ENCODE measurements at regions of chr4 and their contacts with region 1.

Region 1: DNA sequence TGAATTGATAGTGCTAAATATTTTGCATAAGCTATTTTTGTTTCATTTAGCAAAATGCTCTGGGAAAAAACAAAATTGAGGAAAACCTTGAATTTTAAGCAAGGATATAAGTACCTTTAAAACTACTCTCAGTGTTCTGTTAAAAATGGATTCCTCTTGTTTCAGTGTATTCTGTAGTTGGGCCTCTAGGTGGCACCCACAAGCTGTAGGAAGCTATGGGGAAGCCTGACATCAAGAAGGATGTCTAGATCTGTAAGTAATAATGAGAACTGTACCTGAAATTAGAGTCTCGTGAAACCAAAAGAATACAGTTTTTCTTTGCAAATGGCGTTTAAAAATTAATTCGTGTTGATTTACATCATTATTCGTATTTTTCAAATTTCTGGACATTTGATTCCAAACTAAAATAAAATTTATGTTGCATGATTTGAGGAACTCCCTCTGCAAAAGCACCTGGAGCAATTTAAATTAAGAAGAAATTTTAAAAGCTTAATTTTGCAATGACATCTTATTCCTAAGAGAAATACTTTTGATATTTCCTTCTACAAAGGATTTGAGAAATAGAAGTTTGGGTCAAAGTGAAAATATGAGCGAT is 51.2 kb downstream of the TMPRSS11E start:
- DNase-seq: peak; percentile 53
- ATAC-seq: peak; percentile 85
- H3K4me3 ChIP-seq: no peak overlapping the region
- H3K27ac ChIP-seq: no peak overlapping the region
- H3K4me1 ChIP-seq: no peaks in the 10 kb centered on the region
- H3K27me3 ChIP-seq: no peaks in the 10 kb centered on the region
- CTCF ChIP-seq: peak; percentile 67 to 88 (median 76)
- POLR2A ChIP-seq: no peak
- RAD21 ChIP-seq: peak; percentile 87

Region 2: GRCh38 chr4:67545199-67546003 is 953.1 kb before region 1 on chr4 and contains the start of gene CENPC:
- CTCF ChIA-PET with region 1: no interaction called
- POLR2A ChIA-PET with region 1: no interaction called
- RAD21 ChIA-PET with region 1: no interaction called
- intact Hi-C with region 1: no loop called
- DNase-seq: peak; percentile 94
- ATAC-seq: peak; percentile 98
- H3K4me3 ChIP-seq: peak within 1 kb of the TSS; percentile 74 to 91
- H3K27ac ChIP-seq: peak within 1 kb of the TSS; percentile 82
- H3K4me1 ChIP-seq: peaks cover 5 to 11% of the 10 kb centered on the region in 2 experiments; a peak in 3 of 4 replicates
- H3K27me3 ChIP-seq: no peaks in the 10 kb centered on the region
- CTCF ChIP-seq: no peak
- POLR2A ChIP-seq: peak; percentile 69
- RAD21 ChIP-seq: no peak
- total RNA-seq, gene CENPC: 15.4 TPM

Region 3: GRCh38 chr4:69025191-69025998 is 526.9 kb after region 1 on chr4:
- CTCF ChIA-PET with region 1: no interaction called
- POLR2A ChIA-PET with region 1: no interaction called
- RAD21 ChIA-PET with region 1: no interaction called
- intact Hi-C with region 1: loop called (anchors 10 kb)
- DNase-seq: peak; percentile 2
- ATAC-seq: peak; percentile 86
- H3K4me3 ChIP-seq: no peak overlapping the region
- H3K27ac ChIP-seq: no peak overlapping the region
- H3K4me1 ChIP-seq: no peaks in the 10 kb centered on the region
- H3K27me3 ChIP-seq: no peaks in the 10 kb centered on the region
- CTCF ChIP-seq: peak in 2 of 3 experiments; percentile 54 to 55; a peak in 4 of 6 replicates
- POLR2A ChIP-seq: no peak
- RAD21 ChIP-seq: peak; percentile 51

Region 4: GRCh38 chr4:69167300-69167699 is 668.8 kb after region 1 on chr4:
- CTCF ChIA-PET with region 1: no interaction called
- POLR2A ChIA-PET with region 1: no interaction called
- RAD21 ChIA-PET with region 1: interaction called in 1 of 2 experiments, 3 read pairs
- intact Hi-C with region 1: loop called (anchors 1 kb)
- DNase-seq: no peak
- ATAC-seq: no peak
- H3K4me3 ChIP-seq: no peak overlapping the region
- H3K27ac ChIP-seq: no peak overlapping the region
- H3K4me1 ChIP-seq: no peaks in the 10 kb centered on the region
- H3K27me3 ChIP-seq: no peaks in the 10 kb centered on the region
- CTCF ChIP-seq: no peak
- POLR2A ChIP-seq: no peak
- RAD21 ChIP-seq: no peak

Region 5: GRCh38 chr4:69330345-69331047 is 832.0 kb after region 1 on chr4:
- CTCF ChIA-PET with region 1: no interaction called
- POLR2A ChIA-PET with region 1: no interaction called
- RAD21 ChIA-PET with region 1: no interaction called
- intact Hi-C with region 1: loop called (anchors 5 kb)
- DNase-seq: no peak
- ATAC-seq: no peak
- H3K4me3 ChIP-seq: no peak overlapping the region
- H3K27ac ChIP-seq: no peak overlapping the region
- H3K4me1 ChIP-seq: no peaks in the 10 kb centered on the region
- H3K27me3 ChIP-seq: no peaks in the 10 kb centered on the region
- CTCF ChIP-seq: no peak
- POLR2A ChIP-seq: no peak
- RAD21 ChIP-seq: no peak

Region 6: DNA sequence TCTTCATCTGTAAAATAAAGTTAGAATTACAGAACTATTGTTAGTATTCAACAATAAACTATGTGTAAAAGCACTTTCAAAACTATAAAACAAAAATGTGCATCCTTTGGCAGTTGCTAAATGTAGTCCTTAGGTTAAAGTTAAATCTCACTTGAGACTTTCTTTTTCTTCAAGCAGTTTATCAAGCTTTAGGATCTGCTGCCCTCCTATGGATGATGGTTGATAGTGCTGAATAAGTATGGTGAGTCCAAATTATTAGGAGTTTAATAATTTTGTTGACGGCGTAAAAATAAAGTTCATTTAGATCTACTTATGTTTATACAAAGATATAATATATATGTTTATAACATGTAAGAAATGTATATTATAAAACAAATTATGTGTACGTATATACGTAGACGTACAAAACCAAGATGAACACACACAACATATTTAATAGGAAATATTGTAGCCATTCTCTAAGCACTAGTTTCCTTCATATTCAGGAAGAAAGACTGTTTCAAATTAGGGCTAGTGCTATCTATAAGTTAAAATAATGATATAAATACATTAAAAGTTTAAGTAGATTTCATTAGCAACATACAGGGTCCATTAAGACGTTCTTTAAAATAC is 1118.7 kb after region 1 on chr4:
- CTCF ChIA-PET with region 1: no interaction called
- POLR2A ChIA-PET with region 1: no interaction called
- RAD21 ChIA-PET with region 1: interaction called in 1 of 2 experiments, 3 read pairs
- intact Hi-C with region 1: loop called (anchors 1 kb)
- DNase-seq: peak; percentile 47
- ATAC-seq: no peak; the same call in 1 of the 2 replicates
- H3K4me3 ChIP-seq: no peak overlapping the region
- H3K27ac ChIP-seq: no peak overlapping the region
- H3K4me1 ChIP-seq: no peaks in the 10 kb centered on the region
- H3K27me3 ChIP-seq: no peaks in the 10 kb centered on the region
- CTCF ChIP-seq: peak; percentile 49 to 63 (median 56); a peak in 5 of 6 replicates
- POLR2A ChIP-seq: no peak
- RAD21 ChIP-seq: peak; percentile 79

Measured in HCT116 (cell line).